Activated CD8-positive, alpha-beta T cell treated with anti-CD3 and anti-CD28 coated beads for 36 hours (primary cell): ENCODE measurements at regions of chr14 and their contacts with region 1.

Region 1: DNA sequence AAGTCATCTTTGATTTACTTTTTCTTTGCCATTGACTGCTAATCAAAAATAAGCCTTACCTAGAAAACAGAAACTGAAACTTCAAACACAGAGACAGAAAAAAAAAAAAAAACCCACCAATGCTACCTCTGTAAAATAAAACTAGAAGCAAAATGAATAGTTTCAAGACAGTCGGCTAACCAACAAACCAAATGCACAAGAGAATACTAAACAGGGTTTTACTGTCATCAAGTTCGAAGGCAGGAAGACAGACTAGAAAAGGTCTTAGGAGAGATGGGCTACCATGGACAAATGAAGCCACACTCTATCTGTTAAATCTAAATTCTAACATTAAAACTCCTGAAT is 59.5 kb downstream of the SEL1L start:
- DNase-seq: no peak
- ATAC-seq: peak; percentile 64
- H3K4me3 Mint-ChIP-seq: peak overlapping the region; percentile 61
- H3K27ac Mint-ChIP-seq: peak overlapping the region; percentile 90
- H3K4me1 Mint-ChIP-seq: peaks cover 63% of the 10 kb centered on the region
- H3K27me3 Mint-ChIP-seq: no peaks in the 10 kb centered on the region
- CTCF ChIP-seq: no peak

Region 2: DNA sequence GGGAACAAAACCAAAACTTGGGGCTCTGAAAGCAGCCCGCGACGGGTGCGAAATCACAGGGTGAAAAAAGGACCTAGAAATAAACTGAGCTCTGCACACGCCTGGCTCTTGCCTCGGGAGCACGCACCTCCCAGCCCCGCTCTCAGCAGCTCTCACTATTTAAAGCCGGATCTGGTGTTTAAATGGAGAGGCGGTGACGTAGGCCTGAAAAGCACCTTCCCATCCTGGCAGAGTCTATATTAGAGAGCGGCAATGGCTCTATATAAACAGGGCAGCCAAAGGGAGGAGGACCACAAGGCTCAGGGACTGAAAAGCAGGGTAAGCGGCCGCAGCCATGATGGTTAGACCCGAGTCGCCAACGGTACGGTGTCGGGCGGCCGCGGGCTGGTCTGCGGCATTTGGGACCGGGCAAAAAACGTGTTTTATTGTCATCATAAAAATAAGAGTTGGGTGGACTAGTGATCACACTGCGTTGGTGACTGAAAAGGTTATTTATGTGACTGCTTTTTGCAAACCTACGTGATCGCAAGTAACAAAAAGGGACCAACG is 254.8 kb before region 1 on chr14:
- CTCF ChIA-PET with region 1: no interaction called
- POLR2A ChIA-PET with region 1: interaction called, 8 read pairs
- intact Hi-C with region 1: loop called (anchors 5 kb)
- DNase-seq: peak; percentile 91
- ATAC-seq: peak; percentile 67
- H3K4me3 Mint-ChIP-seq: peak overlapping the region; percentile 92
- H3K27ac Mint-ChIP-seq: peak overlapping the region; percentile 98
- H3K4me1 Mint-ChIP-seq: peaks cover 32% of the 10 kb centered on the region
- H3K27me3 Mint-ChIP-seq: no peaks in the 10 kb centered on the region
- CTCF ChIP-seq: no peak

Region 3: GRCh38 chr14:81416194-81416952 is 57.7 kb before region 1 on chr14:
- CTCF ChIA-PET with region 1: no interaction called
- POLR2A ChIA-PET with region 1: no interaction called
- intact Hi-C with region 1: no loop called
- DNase-seq: no peak
- ATAC-seq: no peak
- H3K4me3 Mint-ChIP-seq: no peak overlapping the region
- H3K27ac Mint-ChIP-seq: no peak overlapping the region
- H3K4me1 Mint-ChIP-seq: peaks cover 3% of the 10 kb centered on the region
- H3K27me3 Mint-ChIP-seq: peaks cover 9% of the 10 kb centered on the region
- CTCF ChIP-seq: no peak

Region 4: GRCh38 chr14:81533536-81534343 is 59.6 kb after region 1 on chr14 and contains the start of gene SEL1L:
- CTCF ChIA-PET with region 1: interaction called, 3 read pairs
- POLR2A ChIA-PET with region 1: interaction called, 4 read pairs
- intact Hi-C with region 1: loop called (anchors 5 kb)
- DNase-seq: peak; percentile 100
- ATAC-seq: peak; percentile 97
- H3K4me3 Mint-ChIP-seq: peak within 1 kb of the TSS; percentile 95
- H3K27ac Mint-ChIP-seq: peak within 1 kb of the TSS; percentile 85
- H3K4me1 Mint-ChIP-seq: peaks cover 51% of the 10 kb centered on the region
- H3K27me3 Mint-ChIP-seq: no peaks in the 10 kb centered on the region
- CTCF ChIP-seq: no peak
- total RNA-seq, gene SEL1L: 46.4 to 55.4 TPM